ENCODE measurements at regions of chr4 and their contacts with region 1.

Region 1: DNA sequence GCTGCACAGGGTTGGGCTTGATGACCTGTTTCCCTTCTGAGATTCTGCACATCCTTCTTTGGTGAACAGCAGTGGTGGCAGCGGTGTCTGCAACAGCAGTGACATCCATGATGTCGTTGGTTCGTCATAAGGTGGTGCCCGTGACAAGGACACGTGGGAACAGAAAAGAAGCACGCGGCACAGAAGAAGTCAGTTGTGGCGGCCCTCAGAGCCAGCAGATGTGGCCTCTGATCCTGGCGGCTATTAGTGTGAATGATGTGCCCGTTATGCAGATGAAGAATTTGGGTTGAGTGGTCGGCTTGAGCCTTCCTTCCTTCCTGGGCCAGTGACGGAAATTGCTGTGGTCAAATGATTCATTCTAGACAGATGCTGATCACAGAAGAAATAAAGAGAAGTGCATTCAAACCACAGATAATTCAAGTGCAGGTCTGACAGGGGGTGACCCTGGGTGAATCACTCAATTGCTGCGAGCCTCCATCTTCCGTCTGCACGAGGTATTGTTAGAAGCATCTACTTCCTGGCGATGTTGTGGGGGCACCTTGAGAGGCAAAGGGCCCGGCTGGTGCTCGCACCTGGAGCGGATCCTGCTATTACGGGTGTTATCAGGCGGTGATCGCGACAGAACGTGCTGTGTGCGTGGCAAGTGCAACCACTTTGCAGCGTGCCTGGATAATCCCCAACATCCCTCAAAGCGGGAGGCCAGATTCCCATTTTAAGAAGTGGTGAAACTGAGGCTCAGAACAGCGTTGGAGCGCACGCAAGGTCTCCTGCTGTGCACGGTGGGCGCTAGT is 215.2 kb upstream of the PSAPL1 start:
- DNase-seq: peak; percentile 41 to 59
- H3K4me3 ChIP-seq: no peak overlapping the region
- H3K27ac ChIP-seq: no peak overlapping the region
- H3K4me1 ChIP-seq: peaks cover 13% of the 10 kb centered on the region; the same call in 1 of the 2 replicates
- H3K27me3 ChIP-seq: no peaks in the 10 kb centered on the region
- CTCF ChIP-seq: no peak

Region 2: GRCh38 chr4:7101692-7102515 is 548.0 kb before region 1 on chr4:
- CTCF ChIA-PET with region 1: no interaction called
- POLR2A ChIA-PET with region 1: no interaction called
- intact Hi-C with region 1: no loop called
- DNase-seq: peak; percentile 46 to 62
- H3K4me3 ChIP-seq: peak overlapping the region; percentile 35; the same call in 1 of the 2 replicates
- H3K27ac ChIP-seq: no peak overlapping the region
- H3K4me1 ChIP-seq: peaks cover 13% of the 10 kb centered on the region
- H3K27me3 ChIP-seq: peaks cover 6% of the 10 kb centered on the region; the same call in 1 of the 2 replicates
- CTCF ChIP-seq: peak; percentile 64

Region 3: GRCh38 chr4:7328898-7329638 is 320.9 kb before region 1 on chr4:
- CTCF ChIA-PET with region 1: no interaction called
- POLR2A ChIA-PET with region 1: no interaction called
- intact Hi-C with region 1: loop called (anchors 2 kb)
- DNase-seq: peak; percentile 81 to 85
- H3K4me3 ChIP-seq: no peak overlapping the region
- H3K27ac ChIP-seq: no peak overlapping the region
- H3K4me1 ChIP-seq: peaks cover 12% of the 10 kb centered on the region
- H3K27me3 ChIP-seq: no peaks in the 10 kb centered on the region
- CTCF ChIP-seq: no peak

Region 4: DNA sequence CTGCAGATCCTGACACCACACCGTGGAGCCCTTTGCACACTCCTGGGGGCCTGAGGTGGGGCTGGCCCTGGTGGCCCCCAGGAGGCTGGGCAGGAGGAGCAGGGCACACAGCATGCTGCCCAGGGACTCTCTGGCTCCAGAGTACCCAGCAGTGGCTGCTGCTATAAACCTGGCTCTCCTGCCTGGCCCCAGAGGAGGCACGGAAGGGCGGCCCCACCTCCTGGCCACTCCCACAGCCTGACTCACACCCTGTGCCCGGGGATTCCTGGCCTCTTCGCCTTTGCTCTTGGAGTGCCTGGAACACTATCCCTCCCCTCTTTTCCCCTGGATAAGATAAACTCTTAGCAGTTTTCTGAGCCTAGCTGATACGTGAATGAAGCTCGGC is 215.2 kb before region 1 on chr4 and contains the start of gene PSAPL1:
- CTCF ChIA-PET with region 1: no interaction called
- POLR2A ChIA-PET with region 1: interaction called, 4 read pairs
- intact Hi-C with region 1: loop called (anchors 5 kb)
- DNase-seq: peak; percentile 62 to 79
- H3K4me3 ChIP-seq: no peak within 1 kb of the TSS
- H3K27ac ChIP-seq: no peak within 1 kb of the TSS
- H3K4me1 ChIP-seq: peaks cover 26% of the 10 kb centered on the region
- H3K27me3 ChIP-seq: no peaks in the 10 kb centered on the region
- CTCF ChIP-seq: no peak
- total RNA-seq, gene PSAPL1: 0.15 TPM in 2 replicates

Region 5: GRCh38 chr4:7513671-7514070 is 136.3 kb before region 1 on chr4:
- CTCF ChIA-PET with region 1: no interaction called
- POLR2A ChIA-PET with region 1: no interaction called
- intact Hi-C with region 1: loop called (anchors 10 kb)
- DNase-seq: peak in 1 of 2 experiments; percentile 68
- H3K4me3 ChIP-seq: no peak overlapping the region
- H3K27ac ChIP-seq: no peak overlapping the region
- H3K4me1 ChIP-seq: no peaks in the 10 kb centered on the region
- H3K27me3 ChIP-seq: no peaks in the 10 kb centered on the region
- CTCF ChIP-seq: no peak

Region 6: DNA sequence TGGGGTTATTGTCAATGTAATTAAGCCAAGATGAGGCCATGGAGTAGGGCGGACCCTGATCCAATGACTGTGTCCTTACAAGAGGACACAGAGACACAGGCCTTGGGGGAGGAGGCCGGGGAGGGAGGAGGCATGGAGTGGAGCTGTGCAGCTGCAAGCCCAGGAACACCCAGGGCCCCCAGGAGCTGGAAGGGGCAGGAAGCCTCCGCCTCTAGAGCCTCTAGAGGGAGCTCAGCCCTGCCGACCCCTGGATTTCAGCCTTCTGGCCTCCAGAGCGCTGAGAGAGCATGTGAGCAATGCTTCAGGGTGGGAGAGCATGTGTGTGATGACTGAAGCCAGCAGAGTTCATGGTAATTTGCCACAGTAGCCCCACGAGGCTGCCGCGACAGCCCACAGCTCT is 55.1 kb after region 1 on chr4:
- CTCF ChIA-PET with region 1: no interaction called
- POLR2A ChIA-PET with region 1: no interaction called
- intact Hi-C with region 1: no loop called
- DNase-seq: no peak
- H3K4me3 ChIP-seq: no peak overlapping the region
- H3K27ac ChIP-seq: no peak overlapping the region
- H3K4me1 ChIP-seq: no peaks in the 10 kb centered on the region
- H3K27me3 ChIP-seq: no peaks in the 10 kb centered on the region
- CTCF ChIP-seq: no peak

Region 7: DNA sequence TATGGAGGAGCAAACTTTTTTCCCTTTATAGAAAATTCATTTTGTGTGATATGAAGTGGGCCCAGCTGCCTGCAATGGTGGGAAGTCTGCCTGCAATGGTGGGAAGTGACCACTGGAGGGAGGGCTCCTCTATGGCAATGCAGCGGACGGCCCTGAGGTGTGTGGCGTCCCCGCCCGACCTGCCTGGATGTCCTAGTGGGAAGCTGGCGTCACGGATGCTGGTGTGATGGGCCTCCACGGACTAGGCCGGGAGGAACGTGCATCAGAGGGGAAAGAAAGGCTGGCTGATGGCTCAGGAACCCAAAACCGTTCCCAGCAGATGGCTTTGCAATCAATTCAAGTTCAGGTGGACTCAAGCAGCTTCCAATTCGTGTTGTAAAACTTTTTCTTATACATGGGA is 111.8 kb after region 1 on chr4:
- CTCF ChIA-PET with region 1: no interaction called
- POLR2A ChIA-PET with region 1: no interaction called
- intact Hi-C with region 1: loop called (anchors 10 kb)
- DNase-seq: peak in 1 of 2 experiments; percentile 46
- H3K4me3 ChIP-seq: no peak overlapping the region
- H3K27ac ChIP-seq: no peak overlapping the region
- H3K4me1 ChIP-seq: peaks cover 13% of the 10 kb centered on the region; the same call in 1 of the 2 replicates
- H3K27me3 ChIP-seq: no peaks in the 10 kb centered on the region
- CTCF ChIP-seq: peak; percentile 63

Measured in PC-9 (cell line).